ENCODE measurements at regions of chrX and their contacts with region 1.

Region 1: DNA sequence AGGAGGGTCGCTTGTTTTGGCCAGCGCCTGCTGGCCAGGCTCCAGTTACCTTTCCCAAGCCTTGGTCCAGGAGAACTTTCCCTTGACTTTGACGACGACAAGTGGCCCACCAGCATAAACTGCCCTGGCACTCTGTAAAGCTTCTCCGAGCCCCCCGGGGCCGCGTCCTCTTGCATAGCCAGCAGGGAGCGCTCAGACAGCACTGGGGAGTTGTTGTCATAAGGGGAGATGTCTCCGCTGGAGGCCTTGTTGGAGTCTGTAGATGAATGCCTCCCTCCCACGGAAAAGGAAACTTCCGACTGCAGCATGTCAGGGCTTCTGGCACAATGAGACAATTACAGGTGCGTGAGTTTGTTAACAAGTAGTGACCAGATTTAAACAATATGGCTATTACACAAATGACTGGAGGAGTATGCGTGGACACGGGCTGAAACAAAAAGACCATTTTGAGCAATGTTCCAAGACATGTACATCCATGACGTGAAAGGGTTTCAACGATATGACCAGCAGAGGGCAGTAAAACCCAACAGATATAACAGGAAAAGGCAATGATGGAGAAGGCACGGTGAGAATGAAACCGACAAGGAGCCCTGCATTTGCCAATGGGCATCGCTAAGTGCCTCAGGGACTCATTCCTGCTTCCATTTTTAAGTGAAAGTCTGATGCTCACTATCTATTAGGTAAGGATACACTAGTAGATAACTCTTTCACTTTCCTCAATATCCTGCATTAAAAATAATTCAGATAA is 33.0 kb downstream of the HCCS start:
- DNase-seq: peak; percentile 69
- H3K4me3 ChIP-seq: no peak overlapping the region
- H3K27ac ChIP-seq: no peak overlapping the region
- H3K4me1 ChIP-seq: no peaks in the 10 kb centered on the region
- H3K27me3 ChIP-seq: no peaks in the 10 kb centered on the region
- CTCF ChIP-seq: peak; percentile 54 to 70

Region 2: GRCh38 chrX:11111038-11111851 is 32.9 kb before region 1 on chrX and contains the start of gene HCCS:
- CTCF ChIA-PET with region 1: no interaction called
- dilution Hi-C with region 1: no loop called
- in situ Hi-C with region 1: no loop called
- intact Hi-C with region 1: no loop called
- DNase-seq: peak; percentile 80
- H3K4me3 ChIP-seq: peak within 1 kb of the TSS; percentile 75 to 82 (median 76)
- H3K27ac ChIP-seq: peak within 1 kb of the TSS; percentile 93
- H3K4me1 ChIP-seq: peaks cover 17% of the 10 kb centered on the region
- H3K27me3 ChIP-seq: no peaks in the 10 kb centered on the region
- CTCF ChIP-seq: no peak
- total RNA-seq, gene HCCS: 25.8 to 42.2 TPM

Region 3: GRCh38 chrX:11367609-11368430 is 223.7 kb after region 1 on chrX:
- CTCF ChIA-PET with region 1: no interaction called
- dilution Hi-C with region 1: no loop called
- in situ Hi-C with region 1: no loop called
- intact Hi-C with region 1: loop called (anchors 1 kb)
- DNase-seq: no peak
- H3K4me3 ChIP-seq: no peak overlapping the region
- H3K27ac ChIP-seq: no peak overlapping the region
- H3K4me1 ChIP-seq: no peaks in the 10 kb centered on the region
- H3K27me3 ChIP-seq: no peaks in the 10 kb centered on the region
- CTCF ChIP-seq: no peak

Region 4: GRCh38 chrX:11381464-11381863 is 237.4 kb after region 1 on chrX:
- CTCF ChIA-PET with region 1: no interaction called
- dilution Hi-C with region 1: no loop called
- in situ Hi-C with region 1: no loop called
- intact Hi-C with region 1: loop called (anchors 5 kb)
- DNase-seq: peak; percentile 38
- H3K4me3 ChIP-seq: no peak overlapping the region
- H3K27ac ChIP-seq: no peak overlapping the region
- H3K4me1 ChIP-seq: no peaks in the 10 kb centered on the region
- H3K27me3 ChIP-seq: no peaks in the 10 kb centered on the region
- CTCF ChIP-seq: peak; percentile 53 to 62

Region 5: DNA sequence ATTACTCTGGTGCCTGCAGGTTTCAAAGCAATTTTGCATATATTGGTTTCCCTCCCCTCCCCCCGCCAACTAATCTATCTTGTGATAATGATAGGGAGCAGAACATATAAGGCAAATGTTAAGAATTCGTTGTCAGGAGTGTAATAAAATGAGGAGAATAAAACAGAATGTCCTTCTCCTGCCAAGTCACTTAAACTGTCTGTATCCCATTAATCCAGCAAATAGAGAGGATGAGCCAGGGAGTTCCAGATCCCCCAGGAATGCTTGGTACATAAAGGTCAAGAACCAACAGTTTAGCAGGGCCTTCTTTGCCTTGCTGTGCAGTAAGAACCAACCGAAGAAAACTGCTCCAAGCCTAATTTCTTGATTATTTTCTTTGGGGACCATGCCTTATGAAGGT is 290.5 kb after region 1 on chrX:
- CTCF ChIA-PET with region 1: no interaction called
- dilution Hi-C with region 1: no loop called
- in situ Hi-C with region 1: no loop called
- intact Hi-C with region 1: no loop called
- DNase-seq: no peak
- H3K4me3 ChIP-seq: no peak overlapping the region
- H3K27ac ChIP-seq: no peak overlapping the region
- H3K4me1 ChIP-seq: peaks cover 6% of the 10 kb centered on the region
- H3K27me3 ChIP-seq: no peaks in the 10 kb centered on the region
- CTCF ChIP-seq: no peak

Region 6: DNA sequence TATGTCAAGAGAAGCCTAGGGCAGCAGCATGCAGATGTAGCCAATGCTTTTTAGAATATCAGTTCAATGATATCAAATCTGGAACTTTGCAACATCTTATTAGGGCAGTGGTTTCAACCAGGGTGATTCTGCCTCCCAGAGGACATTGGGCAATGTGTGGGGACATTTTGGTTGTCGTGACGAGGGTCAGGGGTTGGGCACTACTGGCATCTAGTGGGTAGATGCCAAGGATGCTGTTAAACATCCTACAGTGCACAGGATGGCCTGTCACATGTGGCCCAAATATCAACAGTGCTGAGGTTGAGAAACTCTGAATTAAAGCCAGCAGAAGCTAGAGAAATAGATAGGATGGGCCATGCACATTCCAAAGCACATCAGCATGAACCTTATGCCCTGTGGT is 301.4 kb after region 1 on chrX:
- CTCF ChIA-PET with region 1: no interaction called
- dilution Hi-C with region 1: no loop called
- in situ Hi-C with region 1: no loop called
- intact Hi-C with region 1: loop called (anchors 1 kb)
- DNase-seq: no peak
- H3K4me3 ChIP-seq: no peak overlapping the region
- H3K27ac ChIP-seq: no peak overlapping the region
- H3K4me1 ChIP-seq: no peaks in the 10 kb centered on the region
- H3K27me3 ChIP-seq: no peaks in the 10 kb centered on the region
- CTCF ChIP-seq: peak in 1 of 2 donors; percentile 2

Region 7: GRCh38 chrX:11724122-11725017 is 580.3 kb after region 1 on chrX:
- CTCF ChIA-PET with region 1: no interaction called
- dilution Hi-C with region 1: no loop called
- in situ Hi-C with region 1: no loop called
- intact Hi-C with region 1: loop called (anchors 10 kb)
- DNase-seq: peak; percentile 14
- H3K4me3 ChIP-seq: no peak overlapping the region
- H3K27ac ChIP-seq: no peak overlapping the region
- H3K4me1 ChIP-seq: no peaks in the 10 kb centered on the region
- H3K27me3 ChIP-seq: no peaks in the 10 kb centered on the region
- CTCF ChIP-seq: peak; percentile 72 to 74

Region 8: DNA sequence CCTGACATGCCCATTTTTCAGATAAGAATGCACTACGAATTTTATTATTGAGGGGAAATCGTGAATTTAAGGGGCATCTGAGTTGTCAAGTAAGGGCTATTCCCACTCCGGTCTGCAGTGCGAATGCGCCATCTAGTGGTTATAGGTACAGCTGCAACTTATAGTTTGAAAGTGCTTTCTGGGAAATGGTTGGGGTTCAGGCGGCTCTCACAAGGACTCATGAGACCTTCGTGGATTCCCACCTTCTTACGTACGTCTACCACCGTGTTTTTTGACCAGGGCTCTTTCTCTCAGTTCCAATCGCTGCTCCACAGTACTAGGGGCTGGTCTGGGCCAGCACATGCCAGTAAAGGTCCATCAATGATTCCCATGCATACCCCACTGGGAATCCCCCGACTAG is 626.2 kb after region 1 on chrX:
- CTCF ChIA-PET with region 1: no interaction called
- dilution Hi-C with region 1: no loop called
- in situ Hi-C with region 1: no loop called
- intact Hi-C with region 1: loop called (anchors 5 kb)
- DNase-seq: peak; percentile 31
- H3K4me3 ChIP-seq: no peak overlapping the region
- H3K27ac ChIP-seq: no peak overlapping the region
- H3K4me1 ChIP-seq: no peaks in the 10 kb centered on the region
- H3K27me3 ChIP-seq: no peaks in the 10 kb centered on the region
- CTCF ChIP-seq: peak; percentile 92

Region 9: GRCh38 chrX:11908371-11908770 is 764.3 kb after region 1 on chrX:
- CTCF ChIA-PET with region 1: no interaction called
- dilution Hi-C with region 1: no loop called
- in situ Hi-C with region 1: no loop called
- intact Hi-C with region 1: loop called (anchors 5 kb)
- DNase-seq: peak; percentile 25
- H3K4me3 ChIP-seq: no peak overlapping the region
- H3K27ac ChIP-seq: no peak overlapping the region
- H3K4me1 ChIP-seq: no peaks in the 10 kb centered on the region
- H3K27me3 ChIP-seq: no peaks in the 10 kb centered on the region
- CTCF ChIP-seq: peak; percentile 63 to 64